Activated B cell treated with CpG ODN at 0.5 μM for 24 hours (primary cell): ENCODE measurements at regions of chr10 and their contacts with region 1.

Region 1: GRCh38 chr10:79347226-79347893 is at the start of gene PPIF:
- DNase-seq: peak; percentile 94
- ATAC-seq: peak; percentile 95
- H3K4me3 Mint-ChIP-seq: peak within 1 kb of the TSS; percentile 84
- H3K27ac Mint-ChIP-seq: peak within 1 kb of the TSS; percentile 90
- H3K4me1 Mint-ChIP-seq: peaks cover 25% of the 10 kb centered on the region
- H3K27me3 Mint-ChIP-seq: no peaks in the 10 kb centered on the region
- CTCF ChIP-seq: peak; percentile 47
- total RNA-seq, gene PPIF: 68.2 and 72.5 TPM in 2 replicates

Region 2: DNA sequence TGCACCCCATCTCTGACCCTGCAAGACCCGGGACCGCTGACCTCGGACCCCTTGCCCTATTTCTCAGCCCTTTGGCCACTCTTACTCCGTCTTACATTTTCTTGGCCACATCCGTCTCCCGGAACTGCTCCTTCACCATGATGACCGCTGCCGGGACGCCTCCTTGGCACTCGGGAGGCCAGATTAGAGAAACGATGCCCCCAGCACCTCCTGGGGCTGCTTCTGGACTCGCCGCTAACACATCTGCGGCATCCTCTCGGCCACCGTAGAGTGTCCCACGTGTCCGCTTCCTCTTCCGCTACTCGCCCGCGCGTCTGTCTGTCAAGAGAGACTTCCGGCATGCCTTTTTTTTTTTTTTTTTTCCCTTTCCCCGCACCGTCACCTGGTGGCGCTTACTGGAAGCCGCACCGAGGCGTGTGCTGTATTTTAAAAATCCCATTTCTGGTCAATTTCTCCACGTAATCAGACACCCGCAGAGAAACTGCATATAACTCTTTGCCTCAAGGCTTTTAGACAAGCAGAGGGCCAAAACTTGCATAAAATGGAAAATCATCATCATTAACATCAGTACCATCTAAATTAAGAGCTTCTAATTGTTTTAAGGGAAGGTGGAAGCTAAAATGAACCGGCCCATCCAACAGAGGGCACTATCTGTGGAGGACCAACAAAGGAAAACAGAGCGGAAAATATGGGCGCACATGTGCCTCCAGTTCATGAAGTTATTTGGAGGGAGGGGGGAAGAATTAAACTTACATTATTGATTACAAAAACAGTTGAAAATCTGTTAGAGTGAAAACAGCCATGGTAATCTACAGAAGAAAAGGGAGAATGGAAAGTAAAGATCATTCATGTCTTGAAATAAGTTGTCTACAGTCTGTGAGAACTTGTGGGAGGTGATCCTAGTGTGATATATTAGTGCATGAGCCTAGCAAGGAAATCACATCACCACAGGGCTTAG is 1317.8 kb before region 1 on chr10 and contains the start of gene POLR3A:
- CTCF ChIA-PET with region 1: no interaction called
- POLR2A ChIA-PET with region 1: no interaction called
- intact Hi-C with region 1: loop called (anchors 5 kb)
- DNase-seq: peak; percentile 85
- ATAC-seq: peak; percentile 57
- H3K4me3 Mint-ChIP-seq: peak within 1 kb of the TSS; percentile 99
- H3K27ac Mint-ChIP-seq: peak within 1 kb of the TSS; percentile 88
- H3K4me1 Mint-ChIP-seq: peaks cover 43% of the 10 kb centered on the region
- H3K27me3 Mint-ChIP-seq: no peaks in the 10 kb centered on the region
- CTCF ChIP-seq: no peak
- total RNA-seq, gene POLR3A: 17.0 and 20.3 TPM in 2 replicates

Region 3: DNA sequence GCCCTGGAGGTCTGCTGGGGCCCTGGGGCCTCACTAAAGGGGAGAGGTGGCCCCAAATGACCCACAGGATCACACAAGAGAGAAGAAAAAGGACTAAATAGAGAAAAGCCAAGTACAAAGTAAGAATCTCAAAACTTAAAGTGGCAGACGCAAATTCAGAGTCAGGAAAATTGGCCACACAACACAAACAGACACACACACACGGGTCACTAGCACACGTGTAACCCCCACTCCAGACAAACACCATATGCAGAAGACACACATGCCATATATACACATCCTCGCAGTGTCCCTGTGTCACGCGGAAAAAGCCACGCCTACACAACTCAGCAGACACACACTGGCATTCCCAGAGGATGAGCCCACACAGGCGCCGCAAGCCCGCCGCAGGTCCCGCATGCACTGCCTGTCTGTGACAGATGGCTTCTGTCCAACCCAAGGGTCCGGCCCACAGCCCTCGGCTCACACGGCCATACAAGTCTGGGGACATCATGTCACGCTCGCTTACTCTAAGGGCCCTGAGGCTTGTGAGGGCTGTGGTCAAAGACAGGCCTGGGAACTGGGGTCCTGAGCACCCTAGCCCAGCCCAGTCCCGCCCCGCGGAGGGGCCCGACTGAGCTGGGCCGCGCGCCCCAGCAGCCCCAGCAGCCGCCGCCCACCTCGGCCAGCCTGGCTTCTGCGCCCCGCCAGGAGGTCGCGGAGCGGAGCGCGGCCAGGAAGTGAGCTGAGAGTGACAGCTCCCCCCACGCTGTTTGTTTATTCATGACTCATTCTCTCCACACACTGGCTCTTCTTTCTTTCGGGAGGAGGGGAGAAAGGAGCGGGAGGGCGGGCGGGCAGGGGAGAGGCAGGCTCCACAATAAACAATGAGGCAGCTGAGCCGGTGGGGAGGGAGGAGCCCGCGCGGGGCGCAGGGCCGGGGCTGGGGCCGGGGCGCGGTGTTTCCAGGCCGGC is 374.1 kb before region 1 on chr10:
- CTCF ChIA-PET with region 1: no interaction called
- POLR2A ChIA-PET with region 1: no interaction called
- intact Hi-C with region 1: loop called (anchors 5 kb)
- DNase-seq: peak; percentile 41
- ATAC-seq: peak; percentile 61
- H3K4me3 Mint-ChIP-seq: peak overlapping the region; percentile 73
- H3K27ac Mint-ChIP-seq: no peak overlapping the region
- H3K4me1 Mint-ChIP-seq: peaks cover 14% of the 10 kb centered on the region
- H3K27me3 Mint-ChIP-seq: peaks cover 52% of the 10 kb centered on the region
- CTCF ChIP-seq: no peak

Region 4: GRCh38 chr10:79249186-79250121 is 97.9 kb before region 1 on chr10:
- CTCF ChIA-PET with region 1: no interaction called
- POLR2A ChIA-PET with region 1: interaction called, 37 read pairs
- intact Hi-C with region 1: loop called (anchors 1 kb)
- DNase-seq: peak; percentile 68
- ATAC-seq: peak; percentile 57
- H3K4me3 Mint-ChIP-seq: peak overlapping the region; percentile 79
- H3K27ac Mint-ChIP-seq: peak overlapping the region; percentile 98
- H3K4me1 Mint-ChIP-seq: peaks cover 100% of the 10 kb centered on the region
- H3K27me3 Mint-ChIP-seq: no peaks in the 10 kb centered on the region
- CTCF ChIP-seq: no peak

Region 5: DNA sequence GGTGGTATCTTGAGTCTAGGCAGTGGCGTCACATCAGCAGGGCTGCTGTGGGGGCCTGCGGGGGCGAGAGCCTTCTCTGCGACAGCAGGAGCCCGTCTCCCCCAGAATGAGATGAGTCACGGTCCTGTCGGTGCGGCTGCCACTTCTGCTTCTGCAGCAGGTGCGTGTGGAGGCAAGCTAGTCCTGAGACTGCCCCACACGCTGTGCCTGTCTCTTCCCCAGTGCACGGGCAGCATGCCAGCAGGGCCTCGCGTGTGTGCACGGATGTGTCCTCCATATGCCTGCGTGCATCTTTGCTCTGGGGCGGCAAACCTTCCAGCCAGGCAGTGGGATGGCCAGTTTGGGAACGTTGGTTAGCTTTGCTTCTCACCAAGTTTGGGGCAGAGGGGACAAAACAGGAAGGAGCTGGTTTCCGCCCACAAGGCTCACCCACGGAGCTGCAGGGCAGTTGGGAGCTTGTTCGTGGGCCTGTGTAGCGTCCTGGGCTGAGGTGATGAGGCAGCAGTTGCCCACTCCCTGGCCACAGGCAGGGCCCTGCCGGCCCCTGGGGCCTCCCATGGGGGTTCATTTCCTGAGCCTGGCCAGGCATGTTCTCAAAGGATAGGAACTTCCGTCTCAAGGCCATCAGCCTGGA is 60.9 kb before region 1 on chr10:
- CTCF ChIA-PET with region 1: interaction called, 3 read pairs
- POLR2A ChIA-PET with region 1: interaction called, 5 read pairs
- intact Hi-C with region 1: loop called (anchors 1 kb)
- DNase-seq: peak; percentile 81
- ATAC-seq: peak; percentile 89
- H3K4me3 Mint-ChIP-seq: peak overlapping the region; percentile 78
- H3K27ac Mint-ChIP-seq: peak overlapping the region; percentile 97
- H3K4me1 Mint-ChIP-seq: peaks cover 79% of the 10 kb centered on the region
- H3K27me3 Mint-ChIP-seq: no peaks in the 10 kb centered on the region
- CTCF ChIP-seq: no peak

Region 6: GRCh38 chr10:79331709-79332108 is 15.7 kb before region 1 on chr10:
- CTCF ChIA-PET with region 1: interaction called, 3 read pairs
- POLR2A ChIA-PET with region 1: interaction called, 15 read pairs
- intact Hi-C with region 1: loop called (anchors 1 kb)
- DNase-seq: peak; percentile 57
- ATAC-seq: peak; percentile 93
- H3K4me3 Mint-ChIP-seq: peak overlapping the region; percentile 41
- H3K27ac Mint-ChIP-seq: peak overlapping the region; percentile 79
- H3K4me1 Mint-ChIP-seq: peaks cover 24% of the 10 kb centered on the region
- H3K27me3 Mint-ChIP-seq: no peaks in the 10 kb centered on the region
- CTCF ChIP-seq: no peak

Region 7: DNA sequence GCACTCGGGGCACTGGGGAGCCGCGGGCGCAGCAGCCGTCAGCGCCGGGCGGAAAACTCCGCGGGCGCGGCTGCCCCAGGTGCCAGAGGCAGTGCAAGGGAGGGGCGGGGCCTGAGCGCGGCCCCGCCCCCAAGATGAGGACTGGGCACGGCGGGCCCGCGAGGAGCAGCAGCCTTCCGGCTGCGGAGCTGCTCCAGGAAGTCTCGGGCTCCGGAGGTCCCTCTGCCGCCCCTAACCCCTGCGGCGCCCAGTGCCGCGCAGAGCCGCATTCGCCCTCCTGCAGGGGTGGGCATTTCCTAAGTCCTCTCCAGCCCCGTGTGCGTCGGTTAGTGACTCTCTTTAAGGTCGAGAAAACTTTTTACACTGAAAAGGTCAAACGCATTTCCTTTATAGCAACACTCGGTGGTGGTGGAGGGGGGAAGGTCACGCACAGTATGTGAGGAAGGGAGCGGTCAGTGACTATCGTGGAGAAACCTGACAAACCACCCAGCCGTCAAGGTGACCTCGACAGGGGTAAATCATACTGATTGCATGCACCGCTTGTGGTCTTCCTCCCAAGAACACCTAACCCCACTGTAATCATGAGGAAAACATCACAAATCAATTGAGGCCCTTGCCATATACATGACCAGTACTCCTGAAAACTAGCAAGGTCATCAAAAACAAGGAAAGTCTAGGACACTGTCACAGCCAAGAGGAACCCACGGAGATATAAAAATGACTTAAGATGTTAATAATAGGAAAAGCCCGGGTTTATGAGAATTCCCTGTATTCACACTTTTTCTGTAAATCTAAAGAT is 858.3 kb after region 1 on chr10 and contains the start of gene ANXA11:
- CTCF ChIA-PET with region 1: no interaction called
- POLR2A ChIA-PET with region 1: no interaction called
- intact Hi-C with region 1: loop called (anchors 10 kb)
- DNase-seq: peak; percentile 80
- ATAC-seq: peak; percentile 84
- H3K4me3 Mint-ChIP-seq: peak within 1 kb of the TSS; percentile 83
- H3K27ac Mint-ChIP-seq: peak within 1 kb of the TSS; percentile 92
- H3K4me1 Mint-ChIP-seq: peaks cover 51% of the 10 kb centered on the region
- H3K27me3 Mint-ChIP-seq: no peaks in the 10 kb centered on the region
- CTCF ChIP-seq: no peak
- total RNA-seq, gene ANXA11: 178 and 190 TPM in 2 replicates